H1 (cell line): ENCODE measurements at regions of chr16 and their contacts with region 1.

Region 1: GRCh38 chr16:2919511-2920255 is 8.0 kb downstream of the FLYWCH1 start:
- DNase-seq: peak in 1 of 2 experiments; percentile 83
- H3K4me3 ChIP-seq: no peak overlapping the region
- H3K27ac ChIP-seq: no peak overlapping the region
- H3K4me1 ChIP-seq: peaks cover 0 to 2% (median under 1%) of the 10 kb centered on the region in 4 experiments; a peak in 3 of 7 replicates
- H3K27me3 ChIP-seq: no peaks in the 10 kb centered on the region
- CTCF ChIP-seq: peak; percentile 55 to 85 (median 76)
- EP300 ChIP-seq: no peak
- POLR2A ChIP-seq: no peak
- RAD21 ChIP-seq: peak; percentile 83 to 84

Region 2: DNA sequence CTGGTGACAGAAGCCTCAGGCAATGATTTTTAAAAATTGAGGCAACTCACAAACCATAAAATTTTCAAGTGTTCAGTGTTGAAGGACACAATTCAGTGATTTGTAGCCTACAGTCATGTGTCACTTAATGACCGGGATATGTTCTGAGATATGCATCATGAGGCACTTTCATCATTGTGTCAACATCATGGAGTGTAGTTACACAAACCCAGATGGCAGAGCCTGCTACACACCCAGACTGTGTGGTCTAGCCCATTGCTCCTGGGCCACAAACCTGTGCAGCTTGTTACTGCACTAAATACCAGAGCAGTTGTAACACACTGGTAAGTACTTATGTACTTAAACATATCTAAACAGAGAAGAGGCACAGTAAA is 119.8 kb before region 1 on chr16:
- CTCF ChIA-PET with region 1: no interaction called
- POLR2A ChIA-PET with region 1: no interaction called
- DNase-seq: no peak
- H3K4me3 ChIP-seq: no peak overlapping the region
- H3K27ac ChIP-seq: no peak overlapping the region
- H3K4me1 ChIP-seq: no peaks in the 10 kb centered on the region
- H3K27me3 ChIP-seq: no peaks in the 10 kb centered on the region
- CTCF ChIP-seq: no peak
- EP300 ChIP-seq: no peak
- POLR2A ChIP-seq: no peak
- RAD21 ChIP-seq: no peak

Region 3: DNA sequence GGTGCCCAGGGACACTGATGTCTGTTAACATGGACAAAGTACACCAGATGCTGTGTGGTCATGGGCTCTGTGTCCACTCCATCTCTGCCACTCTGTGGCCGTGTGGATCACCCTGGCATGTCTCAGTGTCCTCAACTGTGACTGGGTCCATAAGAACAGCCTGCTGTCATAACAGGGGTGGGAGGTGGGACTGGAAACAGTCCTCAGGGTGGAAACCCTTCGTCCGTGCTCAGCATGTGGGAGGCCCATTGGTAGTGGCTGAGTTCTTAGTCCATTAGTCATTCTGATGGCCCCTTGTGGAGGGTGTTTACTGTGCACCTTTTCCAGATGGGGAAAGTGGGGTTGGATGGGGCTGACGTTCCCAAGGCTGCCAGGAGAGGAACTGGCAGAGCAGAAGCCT is 23.9 kb before region 1 on chr16:
- CTCF ChIA-PET with region 1: interaction called, 13 read pairs
- POLR2A ChIA-PET with region 1: no interaction called
- DNase-seq: no peak
- H3K4me3 ChIP-seq: no peak overlapping the region
- H3K27ac ChIP-seq: no peak overlapping the region
- H3K4me1 ChIP-seq: peaks cover 0 to 3% (median 0%) of the 10 kb centered on the region in 4 experiments; a peak in 2 of 7 replicates
- H3K27me3 ChIP-seq: no peaks in the 10 kb centered on the region
- CTCF ChIP-seq: no peak
- EP300 ChIP-seq: no peak
- POLR2A ChIP-seq: no peak
- RAD21 ChIP-seq: no peak